Posterior cingulate gyrus (tissue), 11 donors: ENCODE measurements at regions of chr13 and their contacts with region 1.

Region 1: GRCh38 chr13:95301183-95301967 is at the start of gene ABCC4:
- DNase-seq: peak; percentile 14 to 90 (median 37)

Region 2: DNA sequence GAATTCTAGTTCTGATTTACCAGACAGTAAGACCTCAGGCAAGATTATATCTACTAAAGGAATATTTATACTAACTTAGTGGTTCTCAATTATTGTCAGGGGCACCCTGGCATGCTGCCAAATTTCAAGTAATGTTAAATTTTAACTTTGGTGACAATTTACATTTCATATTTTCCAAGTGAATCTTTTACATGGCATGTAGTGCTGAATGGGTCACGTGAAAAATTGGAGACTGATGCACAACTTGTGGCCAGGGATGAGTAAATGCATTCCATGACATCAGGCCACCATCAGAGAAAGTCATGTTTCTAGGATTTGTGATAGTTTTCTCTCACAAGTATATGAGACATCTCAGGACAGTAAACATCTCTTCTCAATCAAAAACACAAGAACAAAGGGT is 386.5 kb before region 1 on chr13:
- intact Hi-C with region 1: no loop called
- DNase-seq: no peak

Region 3: DNA sequence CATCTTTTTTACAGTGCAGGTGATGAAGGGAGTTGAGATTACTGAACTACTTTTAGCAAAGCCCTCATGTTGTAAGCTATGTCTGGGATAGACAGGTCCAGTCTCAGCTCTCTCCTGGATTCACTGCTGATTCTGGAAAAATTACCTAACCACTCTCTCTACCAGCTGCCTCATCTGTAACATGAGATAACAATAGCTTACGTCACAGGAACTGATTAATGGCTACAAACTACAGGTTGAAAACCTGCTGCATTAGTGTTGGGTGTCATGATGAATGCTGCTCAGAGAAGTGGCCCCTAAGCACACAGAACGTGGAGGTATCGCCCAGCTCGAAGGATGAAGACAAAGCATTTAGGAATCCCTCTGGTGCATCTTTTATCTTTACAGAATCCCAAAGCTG is 278.0 kb before region 1 on chr13:
- intact Hi-C with region 1: no loop called
- DNase-seq: no peak

Region 4: DNA sequence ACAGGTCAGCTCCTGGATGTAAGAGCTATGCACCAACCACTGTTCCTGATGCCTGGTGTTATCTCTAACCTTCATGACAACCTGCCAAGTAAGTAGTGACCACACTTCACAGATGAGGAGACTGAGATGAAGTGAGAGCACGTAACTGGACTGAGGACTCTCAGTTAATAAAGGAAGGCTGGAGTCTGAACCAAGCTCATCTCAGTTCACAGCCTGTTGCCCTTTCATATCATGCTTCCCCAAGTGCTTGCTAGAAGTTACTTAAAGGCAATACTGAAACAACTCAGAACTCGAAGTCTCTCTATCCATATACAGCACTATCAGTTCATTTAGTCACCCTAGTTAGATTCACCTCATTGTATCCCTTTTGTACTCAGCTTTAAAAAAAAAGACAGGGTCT is 119.8 kb before region 1 on chr13:
- intact Hi-C with region 1: no loop called
- DNase-seq: no peak

Region 5: GRCh38 chr13:95403828-95404522 is 102.6 kb after region 1 on chr13:
- intact Hi-C with region 1: loop called (anchors 10 kb)
- DNase-seq: peak; percentile 67 to 98 (median 87)

Region 6: DNA sequence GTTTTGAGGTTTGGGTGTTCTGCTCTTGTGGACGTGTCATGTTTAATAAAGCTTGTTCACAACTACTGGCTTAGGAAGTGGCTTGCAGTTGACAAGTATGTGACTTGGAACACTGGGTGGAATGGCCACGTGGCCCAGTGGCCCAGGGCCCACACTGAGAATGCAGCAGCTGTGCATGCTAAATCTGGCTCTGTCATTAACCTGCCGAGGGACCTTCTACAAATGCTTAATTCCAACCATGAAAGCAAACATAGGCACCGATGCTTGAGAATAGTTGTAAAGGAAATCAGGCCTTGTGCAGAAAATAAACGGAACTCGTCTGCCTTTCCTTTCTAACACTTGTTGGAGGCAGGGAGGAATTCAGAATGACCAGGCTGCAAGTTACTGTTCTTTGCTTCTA is 239.5 kb after region 1 on chr13:
- intact Hi-C with region 1: no loop called
- DNase-seq: peak in 9 of 10 donors; percentile 15 to 91 (median 50)